Activated T-helper 1 cell treated with anti-CD3 and anti-CD28 coated beads, Interleukin-12 subunit alpha, Interleukin-12 subunit beta, Interleukin-2, Interleukin-4 antibody, amounts not matched to agents 30 ng/mL and 10 ng/mL and 1 ng/mL, durations not matched to agents 14 hours and 24 hours and 36 hours (primary cell): ENCODE measurements at regions of chr3 and their contacts with region 1.

Region 1: DNA sequence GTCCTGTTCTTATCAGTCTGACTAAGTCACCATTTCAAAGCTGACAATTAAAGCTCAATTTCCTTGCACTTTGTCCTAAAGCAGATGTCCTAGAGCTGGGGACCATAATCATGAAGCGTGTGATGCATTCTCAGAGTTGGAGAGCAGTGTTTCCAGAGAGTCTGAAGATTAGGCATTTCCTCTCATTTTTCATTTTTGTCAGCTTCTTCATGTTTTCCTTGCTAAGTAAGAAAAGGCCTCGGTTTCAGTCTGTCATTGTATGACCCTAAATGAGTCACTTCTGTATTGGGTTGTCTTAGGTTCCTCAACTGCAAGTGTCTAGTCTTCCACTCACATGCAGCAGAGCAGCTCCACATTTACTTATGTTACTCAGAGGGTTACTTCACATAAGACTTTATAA is 257.2 kb upstream of the TPRG1 start:
- DNase-seq: no peak
- H3K4me3 Mint-ChIP-seq: peak overlapping the region; percentile 34
- H3K27ac Mint-ChIP-seq: peak overlapping the region; percentile 88
- H3K4me1 Mint-ChIP-seq: peaks cover 46% of the 10 kb centered on the region
- H3K27me3 Mint-ChIP-seq: no peaks in the 10 kb centered on the region

Region 2: GRCh38 chr3:187041362-187042307 is 1872.9 kb before region 1 on chr3:
- intact Hi-C with region 1: loop called (anchors 10 kb)
- DNase-seq: peak; percentile 57
- H3K4me3 Mint-ChIP-seq: peak overlapping the region; percentile 82
- H3K27ac Mint-ChIP-seq: peak overlapping the region; percentile 95
- H3K4me1 Mint-ChIP-seq: peaks cover 85% of the 10 kb centered on the region
- H3K27me3 Mint-ChIP-seq: no peaks in the 10 kb centered on the region

Region 3: DNA sequence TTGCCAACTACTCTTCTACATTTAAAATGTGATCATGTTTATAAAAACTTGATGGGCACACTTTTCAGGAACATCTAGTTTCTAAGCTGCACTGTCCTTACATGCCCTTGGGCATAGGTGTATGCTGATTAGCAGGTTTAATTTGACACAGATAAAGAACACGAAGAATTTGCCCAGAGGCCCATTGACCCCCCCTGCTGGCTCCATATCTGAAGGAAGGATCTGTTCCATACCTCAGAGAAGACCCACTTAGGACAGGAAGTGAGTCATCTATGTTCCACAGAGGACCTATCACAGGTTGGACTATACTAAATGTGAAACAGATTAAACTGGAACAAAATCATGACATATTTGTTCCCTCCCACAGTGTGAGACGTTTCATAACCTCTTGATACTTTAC is 853.4 kb before region 1 on chr3:
- intact Hi-C with region 1: loop called (anchors 1 kb)
- DNase-seq: peak; percentile 38
- H3K4me3 Mint-ChIP-seq: peak overlapping the region; percentile 61
- H3K27ac Mint-ChIP-seq: peak overlapping the region; percentile 87
- H3K4me1 Mint-ChIP-seq: peaks cover 53% of the 10 kb centered on the region
- H3K27me3 Mint-ChIP-seq: no peaks in the 10 kb centered on the region

Region 4: DNA sequence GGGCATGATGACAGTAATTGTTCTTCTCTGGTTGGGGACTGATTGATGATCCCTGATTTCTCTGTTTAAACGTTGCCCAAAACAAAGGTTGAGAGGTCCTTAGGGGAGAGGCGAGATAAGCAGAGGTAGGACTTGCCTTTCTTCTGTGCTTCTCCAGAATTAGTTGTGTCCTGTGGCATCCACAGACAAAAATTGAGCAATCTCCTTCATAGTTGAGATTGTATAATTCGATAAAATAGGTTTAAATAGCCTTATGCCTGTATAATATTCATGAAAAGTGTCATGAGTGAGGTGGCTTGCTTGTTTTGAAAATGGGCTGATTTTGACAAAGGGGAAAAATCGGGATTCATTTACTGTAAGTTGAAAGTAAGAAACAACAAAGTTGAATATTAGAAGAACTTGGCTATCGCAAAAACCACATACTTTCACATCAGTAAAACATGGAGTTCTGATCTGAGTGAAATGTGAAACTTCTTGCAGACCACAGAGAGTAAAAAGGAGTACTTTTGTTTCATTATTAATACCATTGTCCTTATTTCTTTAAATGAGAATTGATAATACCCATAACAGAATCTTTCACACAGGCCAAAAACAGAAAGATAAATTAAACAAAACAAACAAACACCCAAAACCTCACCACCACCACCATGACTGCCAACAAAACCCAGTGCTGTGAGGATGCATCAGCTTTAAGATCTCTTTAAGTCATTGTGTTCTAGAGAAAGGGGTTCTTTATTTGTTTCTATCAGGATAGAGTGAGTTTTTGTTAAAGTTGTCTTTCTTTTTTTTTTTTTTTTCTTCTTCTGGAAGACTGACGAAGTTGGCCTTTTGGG is 604.9 kb before region 1 on chr3:
- intact Hi-C with region 1: loop called (anchors 1 kb)
- DNase-seq: no peak
- H3K4me3 Mint-ChIP-seq: peak overlapping the region; percentile 40
- H3K27ac Mint-ChIP-seq: peak overlapping the region; percentile 64
- H3K4me1 Mint-ChIP-seq: peaks cover 35% of the 10 kb centered on the region
- H3K27me3 Mint-ChIP-seq: peaks cover 9% of the 10 kb centered on the region

Region 5: DNA sequence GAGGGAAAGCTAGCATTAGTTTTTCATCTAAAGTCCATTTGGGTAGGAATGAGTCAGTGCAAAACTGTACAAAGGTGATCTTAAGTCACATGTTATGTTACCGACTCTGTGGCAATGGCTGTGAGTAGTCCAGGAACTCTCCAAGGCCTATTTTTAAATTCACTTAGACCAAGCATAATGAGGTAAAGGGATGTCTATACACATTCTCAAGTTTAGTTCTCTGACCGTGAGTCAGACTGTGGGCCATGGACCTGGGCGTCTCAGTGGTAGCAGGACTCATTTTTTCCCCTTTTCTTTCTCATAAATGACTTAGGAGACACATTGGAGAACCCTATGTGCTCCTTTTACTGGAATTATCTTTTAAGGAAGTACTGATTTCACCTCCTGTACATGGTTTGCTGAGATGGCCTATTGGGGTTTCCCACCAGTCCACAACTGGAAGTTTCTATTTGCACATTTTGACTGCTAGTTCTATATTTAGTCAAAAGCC is 231.5 kb before region 1 on chr3:
- intact Hi-C with region 1: loop called (anchors 1 kb)
- DNase-seq: no peak
- H3K4me3 Mint-ChIP-seq: no peak overlapping the region
- H3K27ac Mint-ChIP-seq: peak overlapping the region; percentile 74
- H3K4me1 Mint-ChIP-seq: peaks cover 28% of the 10 kb centered on the region
- H3K27me3 Mint-ChIP-seq: no peaks in the 10 kb centered on the region

Region 6: DNA sequence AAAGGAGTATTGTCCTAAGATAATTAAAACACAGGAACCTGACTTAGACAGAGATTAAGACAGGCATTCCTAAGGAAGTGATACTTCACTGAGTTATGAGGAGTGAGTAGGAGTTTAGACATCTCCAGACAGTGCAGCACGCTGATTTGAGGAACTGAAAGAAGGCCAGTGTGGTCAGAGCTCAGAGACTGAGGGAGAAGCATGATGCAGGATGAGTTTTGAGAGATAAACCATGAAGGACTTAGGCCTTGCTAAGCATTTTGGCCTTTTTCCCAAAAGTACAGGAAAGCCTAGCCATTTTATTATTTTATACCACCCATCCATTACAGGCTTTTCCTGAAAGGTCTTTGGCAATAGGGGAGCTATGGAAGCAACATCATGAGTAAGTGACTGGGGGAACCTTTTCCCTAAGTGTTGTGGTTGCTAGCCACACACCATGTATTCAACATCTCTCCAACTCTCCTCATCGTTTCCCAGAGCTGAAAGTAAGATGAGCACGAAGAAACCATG is 118.4 kb before region 1 on chr3:
- intact Hi-C with region 1: no loop called
- DNase-seq: no peak
- H3K4me3 Mint-ChIP-seq: no peak overlapping the region
- H3K27ac Mint-ChIP-seq: no peak overlapping the region
- H3K4me1 Mint-ChIP-seq: peaks cover 16% of the 10 kb centered on the region
- H3K27me3 Mint-ChIP-seq: peaks cover 5% of the 10 kb centered on the region

Region 7: DNA sequence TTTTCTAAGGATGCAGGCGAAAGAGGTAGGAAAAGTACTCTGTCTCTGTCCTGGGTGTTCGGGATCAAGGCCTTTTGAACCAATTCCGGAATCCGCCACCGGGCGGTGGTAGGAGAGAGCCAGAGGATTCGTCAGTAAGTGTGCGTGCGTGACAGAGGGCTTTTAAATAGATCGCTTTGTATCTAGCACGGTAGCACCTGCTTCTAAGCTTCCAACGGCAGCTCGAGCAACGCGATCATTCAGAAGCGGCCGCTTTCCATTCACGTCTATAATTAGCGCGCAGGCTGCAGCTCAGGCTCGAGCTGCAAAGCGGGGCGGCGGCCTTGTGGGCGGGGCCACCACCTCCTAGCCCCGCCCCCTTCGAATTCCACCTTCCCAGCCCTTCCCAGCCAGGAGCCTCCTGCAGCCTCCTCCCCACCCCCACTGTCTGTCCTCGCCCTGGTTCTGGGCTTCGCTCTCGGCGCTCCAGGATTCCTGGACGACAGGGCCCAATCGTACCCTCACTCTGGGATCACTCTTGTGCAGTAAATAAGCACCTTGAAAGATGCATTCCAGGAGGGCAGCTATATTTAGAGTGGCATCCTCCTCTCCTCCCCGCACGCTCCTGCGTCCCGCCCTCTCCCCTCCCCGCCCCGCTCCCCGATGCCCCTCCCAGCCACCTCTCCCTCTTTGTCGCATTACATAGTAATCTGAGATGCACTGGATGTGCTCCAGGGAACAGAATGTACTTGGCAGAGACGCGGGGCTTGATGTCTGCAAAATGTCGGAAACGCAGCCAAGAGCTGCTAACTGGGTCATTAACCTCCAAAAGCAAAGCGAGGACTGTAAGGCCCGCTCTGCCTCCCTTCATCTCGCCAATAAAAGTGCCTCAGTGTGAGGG is 33.1 kb after region 1 on chr3:
- intact Hi-C with region 1: loop called (anchors 1 kb)
- DNase-seq: no peak
- H3K4me3 Mint-ChIP-seq: no peak overlapping the region
- H3K27ac Mint-ChIP-seq: no peak overlapping the region
- H3K4me1 Mint-ChIP-seq: peaks cover 31% of the 10 kb centered on the region
- H3K27me3 Mint-ChIP-seq: peaks cover 4% of the 10 kb centered on the region

Region 8: GRCh38 chr3:189927975-189928895 is 1013.7 kb after region 1 on chr3:
- intact Hi-C with region 1: no loop called
- DNase-seq: no peak
- H3K4me3 Mint-ChIP-seq: no peak overlapping the region
- H3K27ac Mint-ChIP-seq: peak overlapping the region; percentile 13
- H3K4me1 Mint-ChIP-seq: peaks cover 14% of the 10 kb centered on the region
- H3K27me3 Mint-ChIP-seq: no peaks in the 10 kb centered on the region

Region 9: DNA sequence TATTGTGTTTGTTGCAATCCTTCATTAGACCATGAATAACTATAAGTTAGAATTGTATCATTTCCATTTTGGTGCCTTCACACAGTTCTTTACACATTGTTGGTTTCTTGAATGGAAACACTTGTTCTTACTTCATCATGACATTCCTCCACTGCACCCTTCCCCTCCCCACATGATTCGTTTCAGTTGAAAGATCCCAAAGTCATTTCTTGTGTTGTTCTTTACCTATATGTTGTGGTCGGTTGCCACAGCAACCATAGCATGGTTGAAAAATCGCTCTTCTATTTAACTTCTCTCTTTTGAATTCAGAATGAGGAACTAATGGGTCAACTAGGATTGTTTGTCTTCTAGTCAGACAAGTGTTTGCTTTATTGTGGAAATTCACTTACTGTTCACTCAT is 1702.6 kb after region 1 on chr3:
- intact Hi-C with region 1: loop called (anchors 2 kb)
- DNase-seq: peak; percentile 58
- H3K4me3 Mint-ChIP-seq: peak overlapping the region; percentile 61
- H3K27ac Mint-ChIP-seq: peak overlapping the region; percentile 97
- H3K4me1 Mint-ChIP-seq: peaks cover 91% of the 10 kb centered on the region
- H3K27me3 Mint-ChIP-seq: no peaks in the 10 kb centered on the region